ENCODE measurements at regions of chr1 and their contacts with region 1.

Region 1: GRCh38 chr1:232891071-232891470 is 59.3 kb upstream of the NTPCR start:
- DNase-seq: peak; percentile 79
- H3K4me3 ChIP-seq: no peak overlapping the region
- H3K27me3 ChIP-seq: no peaks in the 10 kb centered on the region
- CTCF ChIP-seq: no peak

Region 2: DNA sequence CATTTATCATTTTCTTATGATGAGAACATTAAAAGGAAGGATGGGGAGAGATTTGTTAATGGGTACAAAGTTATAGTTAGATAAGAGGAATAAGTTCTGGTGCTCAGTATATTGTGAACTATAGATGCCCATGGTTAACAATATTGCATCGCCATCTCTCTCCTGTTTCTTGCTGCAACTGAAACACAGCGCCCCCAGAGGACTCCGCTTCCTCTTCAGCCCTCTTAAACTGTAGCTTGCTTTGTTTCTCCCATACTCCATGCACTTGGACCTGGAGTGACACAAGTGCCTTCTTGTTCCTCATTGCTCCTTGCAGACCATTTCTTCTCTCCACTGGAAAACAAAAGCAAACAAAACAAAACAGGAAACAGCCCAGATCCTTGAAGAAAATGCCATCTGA is 10.7 kb before region 1 on chr1:
- CTCF ChIA-PET with region 1: interaction called, 10 read pairs
- POLR2A ChIA-PET with region 1: no interaction called
- DNase-seq: no peak
- H3K4me3 ChIP-seq: no peak overlapping the region
- H3K27me3 ChIP-seq: no peaks in the 10 kb centered on the region; the same call in 1 of the 2 replicates
- CTCF ChIP-seq: peak; percentile 47